GM12878 (cell line): ENCODE measurements at regions of chrX and their contacts with region 1.

Region 1: GRCh38 chrX:8743126-8743732 is 11.3 kb upstream of the ANOS1 start:
- DNase-seq: no peak
- ATAC-seq: peak; percentile 78
- H3K4me3 ChIP-seq: no peak overlapping the region
- H3K27ac ChIP-seq: no peak overlapping the region
- H3K4me1 ChIP-seq: no peaks in the 10 kb centered on the region
- H3K27me3 ChIP-seq: no peaks in the 10 kb centered on the region
- CTCF ChIP-seq: peak; percentile 79 to 84 (median 81)
- EP300 ChIP-seq: no peak
- POLR2A ChIP-seq: no peak
- RAD21 ChIP-seq: peak; percentile 59

Region 2: GRCh38 chrX:7996414-7996813 is 746.8 kb before region 1 on chrX:
- CTCF ChIA-PET with region 1: interaction called, 29 read pairs
- POLR2A ChIA-PET with region 1: no interaction called
- RAD21 ChIA-PET with region 1: interaction called, 7 read pairs
- SMC1A ChIA-PET with region 1: interaction called, 13 read pairs
- in situ Hi-C with region 1: loop called (anchors 5 kb)
- intact Hi-C with region 1: loop called (anchors 1 kb)
- DNase-seq: no peak
- ATAC-seq: peak; percentile 91
- H3K4me3 ChIP-seq: no peak overlapping the region
- H3K27ac ChIP-seq: no peak overlapping the region
- H3K4me1 ChIP-seq: no peaks in the 10 kb centered on the region
- H3K27me3 ChIP-seq: no peaks in the 10 kb centered on the region
- CTCF ChIP-seq: peak; percentile 44 to 75 (median 54); a peak in 5 of 6 replicates
- EP300 ChIP-seq: no peak
- POLR2A ChIP-seq: no peak
- RAD21 ChIP-seq: peak; percentile 84

Region 3: GRCh38 chrX:8323356-8323755 is 419.9 kb before region 1 on chrX:
- CTCF ChIA-PET with region 1: interaction called, 9 read pairs
- POLR2A ChIA-PET with region 1: no interaction called
- RAD21 ChIA-PET with region 1: interaction called, 7 read pairs
- SMC1A ChIA-PET with region 1: interaction called, 3 read pairs
- in situ Hi-C with region 1: no loop called
- intact Hi-C with region 1: loop called (anchors 2 kb)
- DNase-seq: no peak
- ATAC-seq: peak; percentile 81
- H3K4me3 ChIP-seq: no peak overlapping the region
- H3K27ac ChIP-seq: no peak overlapping the region
- H3K4me1 ChIP-seq: no peaks in the 10 kb centered on the region
- H3K27me3 ChIP-seq: no peaks in the 10 kb centered on the region
- CTCF ChIP-seq: peak; percentile 14 to 52 (median 21); a peak in 3 of 6 replicates
- EP300 ChIP-seq: no peak
- POLR2A ChIP-seq: no peak
- RAD21 ChIP-seq: no peak

Region 4: DNA sequence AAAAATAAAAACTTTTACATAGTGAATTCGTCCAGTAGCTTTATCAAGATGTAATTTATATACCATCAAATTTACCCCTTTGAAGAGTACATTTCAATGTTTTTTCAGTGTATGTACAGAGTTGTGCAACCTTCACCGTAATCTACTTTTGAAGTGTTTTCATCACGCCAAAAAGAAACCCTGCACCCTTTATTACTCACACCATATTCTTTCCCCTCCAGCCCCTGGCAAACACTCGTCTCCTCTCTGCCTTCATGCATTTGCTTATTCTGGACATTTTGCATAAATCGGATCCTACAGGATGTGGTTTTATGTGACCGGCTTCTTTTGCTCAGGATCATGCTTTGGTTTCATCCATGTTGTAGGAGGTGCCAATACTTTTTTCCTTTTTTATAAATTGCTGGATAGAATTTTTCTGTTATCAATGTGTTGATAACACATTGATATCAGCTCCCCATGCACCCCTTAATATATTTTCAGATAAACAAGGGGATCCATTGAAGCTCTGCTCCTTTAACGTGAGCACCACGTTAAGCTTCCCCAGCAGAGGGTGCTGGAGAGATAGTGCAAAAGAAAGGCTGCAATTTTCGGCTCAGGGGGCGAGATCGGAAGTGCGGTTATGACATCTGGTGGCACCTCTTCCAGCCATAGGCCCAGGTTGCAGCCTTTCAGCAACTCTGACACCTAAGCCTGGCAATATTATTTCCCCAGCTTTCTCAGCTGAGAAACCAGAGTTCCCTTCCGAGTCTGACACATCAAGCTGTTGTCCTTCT is 378.7 kb before region 1 on chrX:
- CTCF ChIA-PET with region 1: interaction called, 7 read pairs
- POLR2A ChIA-PET with region 1: no interaction called
- RAD21 ChIA-PET with region 1: interaction called, 4 read pairs
- SMC1A ChIA-PET with region 1: interaction called, 8 read pairs
- in situ Hi-C with region 1: no loop called
- intact Hi-C with region 1: loop called (anchors 2 kb)
- DNase-seq: no peak
- ATAC-seq: peak; percentile 81
- H3K4me3 ChIP-seq: no peak overlapping the region
- H3K27ac ChIP-seq: no peak overlapping the region
- H3K4me1 ChIP-seq: no peaks in the 10 kb centered on the region
- H3K27me3 ChIP-seq: no peaks in the 10 kb centered on the region
- CTCF ChIP-seq: peak; percentile 19 to 35 (median 33); a peak in 4 of 6 replicates
- EP300 ChIP-seq: no peak
- POLR2A ChIP-seq: no peak
- RAD21 ChIP-seq: no peak

Region 5: DNA sequence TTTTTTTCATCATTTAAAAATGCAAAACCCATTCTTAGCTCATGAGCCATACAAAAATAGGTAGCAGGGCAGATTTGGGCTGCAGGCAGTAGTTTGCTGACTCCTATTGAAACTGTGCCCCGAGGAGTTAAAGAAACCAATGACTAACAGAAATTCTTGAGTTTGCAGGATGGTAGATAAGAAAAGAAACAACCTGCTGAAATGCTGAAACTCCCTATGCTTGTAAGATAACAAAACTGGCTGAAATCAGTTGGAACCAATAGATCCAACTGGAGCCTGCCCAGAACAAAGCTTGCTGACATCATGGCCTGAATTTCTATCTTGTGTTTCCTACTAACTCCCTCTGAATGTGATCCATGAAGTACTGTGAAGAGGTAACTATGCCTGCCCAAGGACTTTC is 79.9 kb before region 1 on chrX:
- CTCF ChIA-PET with region 1: no interaction called
- POLR2A ChIA-PET with region 1: no interaction called
- RAD21 ChIA-PET with region 1: no interaction called
- SMC1A ChIA-PET with region 1: no interaction called
- in situ Hi-C with region 1: no loop called
- intact Hi-C with region 1: no loop called
- DNase-seq: no peak
- ATAC-seq: no peak
- H3K4me3 ChIP-seq: no peak overlapping the region
- H3K27ac ChIP-seq: no peak overlapping the region
- H3K4me1 ChIP-seq: no peaks in the 10 kb centered on the region
- H3K27me3 ChIP-seq: no peaks in the 10 kb centered on the region
- CTCF ChIP-seq: no peak
- EP300 ChIP-seq: no peak
- POLR2A ChIP-seq: no peak
- RAD21 ChIP-seq: no peak

Region 6: DNA sequence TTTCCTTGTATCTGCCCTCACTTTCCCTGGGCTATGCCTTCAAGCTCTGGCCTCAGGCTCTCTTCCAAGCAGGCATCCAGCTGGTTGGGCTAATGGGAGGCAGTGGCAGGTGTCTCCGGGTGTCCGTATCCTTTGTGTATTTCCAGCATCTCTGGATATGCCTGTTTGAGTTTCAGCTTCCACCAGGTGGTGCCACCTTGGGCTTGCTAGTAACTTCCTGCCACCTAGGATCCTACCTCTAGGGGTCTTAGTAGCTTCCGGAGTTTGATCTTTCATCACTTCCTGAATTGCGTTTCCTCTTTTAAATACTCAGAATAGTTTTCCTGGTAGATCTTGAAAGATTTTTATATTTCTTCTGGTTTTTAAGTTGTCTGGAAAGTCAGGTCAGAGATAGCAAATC is 11.9 kb after region 1 on chrX:
- CTCF ChIA-PET with region 1: interaction called, 14 read pairs
- POLR2A ChIA-PET with region 1: no interaction called
- RAD21 ChIA-PET with region 1: interaction called, 3 read pairs
- SMC1A ChIA-PET with region 1: interaction called, 3 read pairs
- in situ Hi-C with region 1: no loop called
- intact Hi-C with region 1: no loop called
- DNase-seq: no peak
- ATAC-seq: no peak
- H3K4me3 ChIP-seq: no peak overlapping the region
- H3K27ac ChIP-seq: no peak overlapping the region
- H3K4me1 ChIP-seq: no peaks in the 10 kb centered on the region
- H3K27me3 ChIP-seq: no peaks in the 10 kb centered on the region
- CTCF ChIP-seq: no peak
- EP300 ChIP-seq: no peak
- POLR2A ChIP-seq: no peak
- RAD21 ChIP-seq: no peak